Common myeloid progenitor, CD34-positive (primary cell): ENCODE measurements at regions of chr16 and their contacts with region 1.

Region 1: DNA sequence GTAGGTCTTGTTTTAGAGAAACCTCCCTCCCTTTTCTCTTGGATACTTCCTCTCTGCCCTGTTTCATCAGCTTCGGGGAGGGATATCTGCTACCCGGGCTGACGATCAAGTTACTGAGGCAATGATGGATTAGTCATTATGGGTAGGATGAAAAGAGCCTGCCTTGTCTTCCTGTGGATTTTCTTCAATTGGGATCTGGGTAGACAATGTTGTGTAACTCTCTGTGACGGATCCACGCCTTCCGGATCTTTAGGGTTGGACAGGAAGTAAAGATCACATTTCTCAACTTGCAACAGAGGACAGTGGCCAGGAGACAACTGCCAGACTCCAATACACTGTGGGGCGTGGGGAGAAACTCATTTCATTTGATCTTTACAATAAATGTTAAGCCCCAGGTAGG is 11.3 kb upstream of the CHST6 start:
- DNase-seq: no peak
- H3K4me3 ChIP-seq: no peak overlapping the region
- H3K27ac ChIP-seq: no peak overlapping the region
- H3K4me1 ChIP-seq: no peaks in the 10 kb centered on the region
- H3K27me3 ChIP-seq: peaks cover 0 to 8% (median 0%) of the 10 kb centered on the region in 5 experiments

Region 2: GRCh38 chr16:75471723-75472633 is 34.6 kb before region 1 on chr16:
- CTCF ChIA-PET with region 1: interaction called, 11 read pairs
- POLR2A ChIA-PET with region 1: no interaction called
- DNase-seq: peak; percentile 46 to 63 (median 57)
- H3K4me3 ChIP-seq: no peak overlapping the region
- H3K27ac ChIP-seq: no peak overlapping the region
- H3K4me1 ChIP-seq: no peaks in the 10 kb centered on the region
- H3K27me3 ChIP-seq: peaks cover 0 to 1% (median 0%) of the 10 kb centered on the region in 5 experiments